ENCODE measurements at regions of chr5 and their contacts with region 1.

Region 1: GRCh38 chr5:151740336-151740942 is 18.0 kb downstream of the ATOX1 start:
- DNase-seq: peak; percentile 80 to 84 (median 82)
- ATAC-seq: peak; percentile 76 to 84
- H3K4me3 ChIP-seq: no peak overlapping the region
- H3K27ac ChIP-seq: peak overlapping the region; percentile 70
- H3K4me1 ChIP-seq: peaks cover 10% of the 10 kb centered on the region
- H3K27me3 ChIP-seq: no peaks in the 10 kb centered on the region

Region 2: DNA sequence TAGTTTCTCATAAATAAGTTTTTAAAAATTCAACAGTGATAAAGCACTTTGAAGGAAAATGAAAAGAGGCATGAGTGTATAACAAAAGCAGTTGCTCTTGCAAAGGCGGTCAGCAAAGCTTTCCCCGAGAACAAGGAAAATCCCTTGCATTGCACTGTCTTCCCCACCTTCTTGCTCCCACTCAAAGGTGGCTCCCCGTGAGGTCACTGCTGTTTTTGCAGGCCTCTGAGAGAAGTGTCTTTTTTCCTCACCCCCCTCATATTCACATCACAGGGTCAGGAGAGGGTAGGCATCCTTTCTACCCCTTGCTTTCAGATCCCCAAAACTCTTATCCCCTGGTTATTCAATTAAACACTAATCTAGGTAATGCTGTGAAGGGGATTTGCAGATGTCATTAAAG is 308.2 kb before region 1 on chr5:
- intact Hi-C with region 1: loop called in 1 of 4 experiments (anchors 10 kb)
- DNase-seq: no peak
- ATAC-seq: no peak
- H3K4me3 ChIP-seq: no peak overlapping the region
- H3K27ac ChIP-seq: no peak overlapping the region
- H3K4me1 ChIP-seq: no peaks in the 10 kb centered on the region
- H3K27me3 ChIP-seq: no peaks in the 10 kb centered on the region

Region 3: GRCh38 chr5:151523335-151523734 is 217.1 kb before region 1 on chr5:
- intact Hi-C with region 1: loop called in 1 of 4 experiments (anchors 10 kb)
- DNase-seq: no peak
- ATAC-seq: peak; percentile 42 to 43
- H3K4me3 ChIP-seq: no peak overlapping the region
- H3K27ac ChIP-seq: no peak overlapping the region
- H3K4me1 ChIP-seq: no peaks in the 10 kb centered on the region
- H3K27me3 ChIP-seq: no peaks in the 10 kb centered on the region

Region 4: DNA sequence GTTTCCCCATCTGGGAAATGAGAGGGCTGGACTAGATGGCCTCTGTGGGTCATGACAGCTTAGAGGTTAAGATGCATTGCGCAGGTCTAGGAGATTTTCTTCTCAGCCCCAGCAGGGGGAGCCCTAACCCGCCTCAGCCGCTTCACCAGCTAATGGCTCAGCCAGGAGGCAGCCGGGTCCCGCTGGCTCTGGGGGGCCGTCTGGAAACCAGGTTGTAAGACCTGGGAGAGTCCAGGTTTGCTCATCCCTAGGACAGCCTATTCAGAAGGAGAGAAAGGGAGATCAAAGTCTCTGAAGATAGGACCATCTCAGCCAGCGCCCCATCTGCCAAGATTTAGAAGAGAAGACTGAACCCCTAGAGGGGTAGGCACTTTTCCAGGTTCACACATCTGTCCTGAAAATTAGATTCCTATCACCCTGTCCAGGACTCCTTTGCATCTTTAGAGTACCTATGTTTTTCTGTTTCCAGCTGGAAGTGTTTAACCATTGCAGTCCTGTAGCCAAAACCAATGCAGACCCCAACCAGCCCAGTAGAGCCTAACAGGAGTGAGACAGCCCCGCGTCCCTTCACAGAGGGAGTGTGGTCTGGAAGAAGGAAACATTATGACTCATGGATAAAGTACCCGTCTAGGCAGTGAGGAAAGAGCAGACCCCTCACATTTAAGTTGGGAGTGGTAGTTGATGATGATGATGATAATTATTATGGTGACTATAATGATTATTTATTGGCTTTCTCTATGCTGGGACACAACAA is 81.3 kb before region 1 on chr5:
- intact Hi-C with region 1: loop called (anchors 2 kb)
- DNase-seq: peak; percentile 85 to 95 (median 90)
- ATAC-seq: peak; percentile 84 to 86
- H3K4me3 ChIP-seq: no peak overlapping the region
- H3K27ac ChIP-seq: no peak overlapping the region
- H3K4me1 ChIP-seq: peaks cover 4% of the 10 kb centered on the region
- H3K27me3 ChIP-seq: no peaks in the 10 kb centered on the region